ENCODE measurements at regions of chr18 and their contacts with region 1.

Region 1: DNA sequence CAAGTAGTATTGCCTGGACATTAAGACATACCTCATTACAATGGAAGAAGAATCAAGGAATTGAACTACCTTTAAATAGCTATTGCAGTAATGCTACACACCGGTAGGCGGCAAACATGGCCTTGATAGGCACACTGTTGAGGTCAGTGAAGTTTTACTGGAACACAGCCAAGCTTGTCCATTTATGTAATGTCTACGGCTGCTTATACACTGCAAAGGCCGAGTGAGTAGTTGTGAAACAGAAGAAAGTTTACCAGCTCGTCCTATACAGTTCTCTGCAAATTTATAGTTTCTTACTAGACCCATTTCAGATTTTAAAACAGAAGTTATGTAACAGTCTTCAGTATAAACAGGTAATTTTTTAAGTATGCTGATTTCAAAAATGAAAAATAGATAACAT is 38.8 kb downstream of the PPP4R1 start:
- DNase-seq: peak; percentile 70 to 80
- ATAC-seq: peak; percentile 90
- H3K4me3 ChIP-seq: no peak overlapping the region
- H3K27ac ChIP-seq: no peak overlapping the region
- H3K4me1 ChIP-seq: no peaks in the 10 kb centered on the region
- H3K27me3 ChIP-seq: no peaks in the 10 kb centered on the region

Region 2: DNA sequence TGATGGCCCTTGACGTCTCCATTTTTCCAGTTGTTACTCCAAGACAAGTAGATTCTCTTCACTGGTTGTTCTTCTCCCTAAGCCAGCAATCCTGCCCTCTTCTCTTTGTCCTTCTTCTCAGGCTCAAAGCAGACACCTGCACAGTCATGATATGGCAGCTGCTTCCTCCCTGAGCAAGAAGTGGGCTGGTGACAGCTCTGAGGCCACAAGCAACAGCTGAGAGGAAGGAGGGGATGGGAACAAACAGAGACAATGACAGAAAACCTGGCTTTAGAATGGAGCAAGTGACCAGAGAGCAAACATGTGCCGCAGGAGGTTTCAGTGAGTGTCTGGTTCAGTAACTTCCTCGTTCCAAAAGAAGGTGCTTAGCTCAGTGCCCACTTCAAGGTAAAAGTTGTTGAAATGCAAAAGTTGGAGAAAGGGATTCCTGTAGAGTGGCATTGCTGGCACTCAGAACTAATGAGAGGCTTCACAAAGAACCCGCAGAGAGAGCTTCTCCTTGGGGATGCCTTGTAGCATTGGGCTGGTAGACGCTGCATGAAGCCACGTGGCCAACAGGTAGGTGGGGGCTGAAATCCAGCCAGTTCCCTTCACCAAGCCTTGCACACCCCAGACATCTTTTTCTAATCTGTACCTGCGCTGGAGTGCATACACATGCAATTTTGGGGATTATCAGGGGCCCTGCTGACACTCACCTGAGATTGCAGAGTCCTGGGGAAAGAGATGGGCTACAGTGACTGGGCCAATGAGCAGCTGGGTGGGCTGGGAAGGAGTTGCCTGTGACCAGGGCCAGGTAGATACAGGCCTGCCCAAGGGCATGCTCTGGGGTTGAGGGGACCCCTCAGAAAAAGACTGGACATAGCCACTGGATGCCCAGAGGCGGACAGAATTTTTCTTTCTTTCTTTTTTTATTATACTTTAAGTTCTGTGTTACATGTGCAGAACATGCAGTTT is 1119.6 kb before region 1 on chr18:
- intact Hi-C with region 1: no loop called
- DNase-seq: no peak
- ATAC-seq: no peak
- H3K4me3 ChIP-seq: no peak overlapping the region
- H3K27ac ChIP-seq: no peak overlapping the region
- H3K4me1 ChIP-seq: no peaks in the 10 kb centered on the region
- H3K27me3 ChIP-seq: no peaks in the 10 kb centered on the region

Region 3: DNA sequence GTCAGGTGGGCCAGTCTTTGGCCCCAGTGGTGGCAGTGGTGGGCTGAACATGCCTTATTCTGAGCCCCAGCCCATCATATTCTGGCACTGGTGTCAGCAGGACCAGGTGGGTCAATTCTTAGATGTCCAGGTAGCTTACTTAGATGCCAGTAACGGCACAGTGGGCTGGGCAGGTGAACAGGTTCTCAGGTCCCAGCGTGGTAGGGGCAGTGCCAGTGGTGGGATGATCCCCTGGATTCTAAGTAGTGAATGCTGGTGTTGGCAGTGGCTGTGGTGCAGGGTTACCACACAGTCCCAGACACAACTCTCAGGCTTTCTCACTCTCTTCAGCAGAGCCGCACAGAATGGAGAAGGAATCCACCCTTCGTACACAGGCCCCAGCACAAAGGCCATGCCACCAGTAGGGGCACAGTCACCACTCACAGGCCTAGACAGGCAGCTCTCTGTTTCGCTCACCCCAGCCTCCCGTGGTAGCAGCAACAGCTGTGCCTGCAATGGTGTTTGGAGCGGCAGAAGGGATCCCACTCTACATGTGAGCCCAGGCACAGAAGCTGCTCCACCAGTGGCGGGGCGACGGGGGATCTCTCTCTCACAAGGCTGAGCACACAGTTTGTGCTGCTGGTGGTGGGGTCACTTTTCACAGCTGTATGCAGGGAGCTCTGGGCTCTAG is 341.7 kb before region 1 on chr18:
- intact Hi-C with region 1: no loop called
- DNase-seq: peak; percentile 38 to 61
- ATAC-seq: no peak
- H3K4me3 ChIP-seq: no peak overlapping the region
- H3K27ac ChIP-seq: no peak overlapping the region
- H3K4me1 ChIP-seq: no peaks in the 10 kb centered on the region
- H3K27me3 ChIP-seq: no peaks in the 10 kb centered on the region

Region 4: DNA sequence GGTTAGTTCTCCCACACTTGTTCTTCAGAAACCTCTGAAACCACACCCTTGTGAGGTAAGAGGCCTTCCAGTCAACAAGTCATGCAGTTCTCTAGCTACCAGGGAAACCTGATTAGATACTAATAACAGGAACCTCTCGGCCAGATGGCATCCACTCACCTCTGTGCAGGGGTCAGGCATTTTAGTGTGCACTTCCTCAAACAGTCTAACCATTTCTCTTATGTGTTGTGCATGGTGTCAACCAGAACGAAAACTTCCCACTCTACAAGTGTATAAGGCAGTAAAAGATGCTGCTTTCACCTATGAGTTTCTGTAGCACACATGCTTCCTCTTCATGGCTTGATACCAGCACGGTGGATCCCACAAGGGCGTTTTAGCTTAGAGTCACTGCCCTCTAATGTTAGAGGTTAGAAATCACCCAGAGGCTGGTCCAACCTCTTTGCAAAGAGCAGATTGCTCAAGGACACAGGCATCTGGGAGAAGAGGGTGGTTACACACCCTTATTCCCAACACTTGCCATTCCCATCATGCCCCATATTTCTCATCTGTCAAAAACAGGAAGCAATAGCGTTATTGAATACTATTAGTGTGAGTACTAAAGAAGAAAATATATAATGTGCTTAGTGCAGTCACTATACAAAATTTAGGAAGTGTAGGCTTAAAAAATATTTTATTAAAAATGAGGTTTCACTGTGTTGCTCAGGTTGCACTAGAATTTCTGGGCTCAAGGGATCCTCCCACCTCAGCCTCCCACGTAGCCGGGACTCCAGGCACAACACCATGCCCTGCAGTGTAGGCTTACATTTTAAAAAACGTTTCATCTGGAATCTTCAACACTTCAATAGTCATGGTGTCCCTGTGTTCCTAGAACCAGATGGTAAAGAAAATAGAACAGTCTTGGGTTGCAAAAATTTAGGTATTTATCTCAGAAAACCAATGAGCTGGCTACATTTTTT is 98.0 kb after region 1 on chr18:
- intact Hi-C with region 1: loop called in 1 of 2 experiments (anchors 10 kb)
- DNase-seq: no peak
- ATAC-seq: peak; percentile 65
- H3K4me3 ChIP-seq: no peak overlapping the region
- H3K27ac ChIP-seq: no peak overlapping the region
- H3K4me1 ChIP-seq: peaks cover 0 to 5% of the 10 kb centered on the region in 2 donors
- H3K27me3 ChIP-seq: no peaks in the 10 kb centered on the region

Region 5: GRCh38 chr18:9683407-9684396 is 108.1 kb after region 1 on chr18:
- intact Hi-C with region 1: loop called (anchors 10 kb)
- DNase-seq: peak in 1 of 2 donors; percentile 58
- ATAC-seq: peak; percentile 81
- H3K4me3 ChIP-seq: no peak overlapping the region
- H3K27ac ChIP-seq: peak overlapping the region; percentile 59 to 85
- H3K4me1 ChIP-seq: peaks cover 0 to 3% of the 10 kb centered on the region in 2 donors
- H3K27me3 ChIP-seq: no peaks in the 10 kb centered on the region

Region 6: DNA sequence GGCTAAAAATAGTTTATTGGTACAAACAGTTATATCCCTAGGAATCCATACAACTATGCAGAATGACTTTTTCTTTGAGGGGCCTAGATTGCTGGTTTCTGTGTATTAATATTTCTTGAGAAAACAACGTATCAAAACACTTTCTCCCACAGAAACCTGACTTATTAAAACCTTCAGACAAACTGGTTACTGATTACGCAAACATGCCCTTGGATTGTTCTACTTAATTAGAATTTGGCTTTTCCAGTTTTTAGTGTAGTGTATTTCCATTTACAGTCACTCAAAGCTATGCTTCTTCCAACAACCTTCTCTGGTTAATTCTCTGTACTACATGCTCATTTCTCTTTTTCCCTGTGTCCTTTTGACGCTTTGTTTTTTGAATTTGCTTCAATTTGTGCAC is 358.3 kb after region 1 on chr18:
- intact Hi-C with region 1: loop called in 1 of 2 experiments (anchors 10 kb)
- DNase-seq: no peak
- ATAC-seq: no peak
- H3K4me3 ChIP-seq: no peak overlapping the region
- H3K27ac ChIP-seq: no peak overlapping the region
- H3K4me1 ChIP-seq: no peaks in the 10 kb centered on the region
- H3K27me3 ChIP-seq: no peaks in the 10 kb centered on the region

Measured in aorta (tissue), 5 donors.